Esophagus muscularis mucosa (tissue), 4 donors: ENCODE measurements at regions of chr17 and their contacts with region 1.

Region 1: DNA sequence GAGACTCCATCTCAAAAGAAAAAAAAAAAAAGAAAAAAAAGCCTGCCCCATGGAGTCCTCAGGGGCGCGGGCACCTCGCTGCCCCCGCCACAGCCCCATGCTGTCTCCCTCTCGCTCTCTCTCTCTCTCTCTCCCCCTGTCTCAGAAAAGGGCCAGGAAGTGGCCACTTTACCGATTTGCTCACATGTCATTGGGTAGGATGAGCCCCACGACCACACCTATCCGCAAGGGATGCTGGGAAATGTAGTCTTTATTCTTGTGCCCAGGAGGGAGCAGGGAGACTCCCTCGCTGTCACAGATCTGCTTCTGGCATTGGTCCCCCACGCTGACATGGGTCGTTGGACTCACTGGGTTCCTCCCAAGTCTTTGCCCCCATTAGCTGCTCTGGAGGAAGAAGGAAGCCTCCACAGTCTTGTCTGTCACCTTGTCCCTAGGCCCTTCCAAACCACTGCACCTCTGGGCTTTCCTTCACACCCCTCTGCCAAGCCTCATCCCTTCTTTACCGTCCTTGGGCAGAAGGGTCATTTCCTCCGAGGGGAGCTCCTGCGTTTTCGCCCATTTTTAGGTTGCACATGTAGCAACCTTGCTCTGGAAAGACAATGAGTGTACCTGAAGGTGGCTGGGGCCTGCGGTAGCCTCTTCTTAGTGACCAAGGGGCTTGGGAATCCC is 6.9 kb upstream of the GJD3 start:
- DNase-seq: no peak
- H3K4me3 ChIP-seq: no peak overlapping the region
- H3K27ac ChIP-seq: no peak overlapping the region
- H3K4me1 ChIP-seq: no peaks in the 10 kb centered on the region
- H3K27me3 ChIP-seq: no peaks in the 10 kb centered on the region
- CTCF ChIP-seq: no peak
- EP300 ChIP-seq: no peak
- POLR2A ChIP-seq: no peak

Region 2: DNA sequence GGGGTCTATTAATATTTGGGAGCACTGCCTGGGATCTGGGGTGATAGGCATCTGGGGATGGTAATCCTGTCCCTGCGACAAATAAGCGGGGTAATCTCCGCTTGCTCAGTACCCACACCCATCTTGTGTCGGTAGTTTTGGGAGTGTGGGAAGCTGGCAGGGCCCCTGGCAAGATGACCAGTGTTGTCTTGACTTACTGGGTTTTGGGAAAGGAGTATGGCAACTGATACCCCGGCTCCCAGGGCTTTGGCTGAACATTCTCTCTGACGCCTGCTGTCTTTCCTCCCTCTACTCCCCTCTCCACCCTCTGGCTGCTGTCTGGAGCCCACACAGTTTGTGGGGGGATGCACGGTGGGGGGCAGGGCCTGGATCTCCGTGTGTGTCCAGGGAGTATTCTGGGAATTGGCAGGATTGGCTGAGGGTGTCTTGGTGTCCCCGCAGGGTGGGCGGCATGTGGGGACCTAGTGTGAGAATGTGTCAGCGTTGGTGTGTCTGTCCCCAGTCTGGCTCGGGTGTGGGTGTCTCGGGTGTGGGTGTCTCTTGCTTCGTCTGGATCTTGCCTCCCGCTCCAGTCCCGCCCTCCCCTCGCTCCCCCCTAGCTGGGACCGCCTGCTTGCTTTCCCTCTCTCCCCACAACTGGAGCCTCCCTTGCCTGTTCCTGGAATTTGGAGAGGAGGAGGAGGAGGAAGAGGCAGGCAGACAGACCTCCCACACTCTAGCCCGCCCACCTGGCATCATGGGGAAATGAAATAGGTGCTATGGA is 50.5 kb before region 1 on chr17:
- intact Hi-C with region 1: no loop called
- DNase-seq: no peak
- H3K4me3 ChIP-seq: peak overlapping the region; percentile 90 to 99 (median 94)
- H3K27ac ChIP-seq: peak overlapping the region; percentile 94 to 98 (median 96)
- H3K4me1 ChIP-seq: peaks cover 92 to 96% (median 94%) of the 10 kb centered on the region in 4 donors
- H3K27me3 ChIP-seq: no peaks in the 10 kb centered on the region
- CTCF ChIP-seq: no peak
- EP300 ChIP-seq: no peak
- POLR2A ChIP-seq: no peak

Region 3: GRCh38 chr17:40331743-40332641 is 39.4 kb before region 1 on chr17:
- intact Hi-C with region 1: no loop called
- DNase-seq: no peak
- H3K4me3 ChIP-seq: peak overlapping the region; percentile 26 to 38 (median 32)
- H3K27ac ChIP-seq: peak overlapping the region; percentile 94 to 98 (median 96)
- H3K4me1 ChIP-seq: peaks cover 89 to 100% (median 100%) of the 10 kb centered on the region in 4 donors
- H3K27me3 ChIP-seq: no peaks in the 10 kb centered on the region
- CTCF ChIP-seq: no peak
- EP300 ChIP-seq: no peak
- POLR2A ChIP-seq: peak; percentile 4

Region 4: GRCh38 chr17:40410082-40410481 is 38.7 kb after region 1 on chr17:
- intact Hi-C with region 1: loop called (anchors 5 kb)
- DNase-seq: no peak
- H3K4me3 ChIP-seq: no peak overlapping the region
- H3K27ac ChIP-seq: no peak overlapping the region
- H3K4me1 ChIP-seq: peaks cover 0 to 2% (median under 1%) of the 10 kb centered on the region in 4 donors
- H3K27me3 ChIP-seq: no peaks in the 10 kb centered on the region
- CTCF ChIP-seq: no peak
- EP300 ChIP-seq: no peak
- POLR2A ChIP-seq: no peak